A673 (cell line): ENCODE measurements at regions of chr1 and their contacts with region 1.

Region 1: GRCh38 chr1:175146529-175147213 is 45.9 kb downstream of the KIAA0040 start:
- DNase-seq: peak; percentile 75
- H3K4me3 ChIP-seq: no peak overlapping the region
- H3K27ac ChIP-seq: no peak overlapping the region
- H3K4me1 ChIP-seq: no peaks in the 10 kb centered on the region
- H3K27me3 ChIP-seq: no peaks in the 10 kb centered on the region
- CTCF ChIP-seq: peak; percentile 94

Region 2: DNA sequence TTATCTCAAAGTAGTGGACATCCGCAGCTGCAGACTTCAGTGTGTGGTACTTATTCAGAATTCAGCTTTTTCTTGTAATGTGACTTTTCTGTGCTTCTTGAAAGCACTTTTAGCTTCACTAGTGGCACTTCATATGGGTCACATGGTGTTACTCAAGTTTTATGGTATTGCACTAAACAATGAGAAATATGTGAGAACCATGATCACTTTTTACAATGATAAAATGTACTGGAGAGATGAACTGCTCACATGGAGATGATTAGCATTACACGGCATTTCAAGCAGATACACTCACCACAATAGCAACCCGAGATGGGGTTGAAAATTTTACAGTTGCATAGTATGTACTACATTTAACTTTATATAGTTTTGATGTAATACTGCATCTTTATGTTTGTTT is 739.0 kb before region 1 on chr1:
- CTCF ChIA-PET with region 1: interaction called, 10 read pairs
- POLR2A ChIA-PET with region 1: no interaction called
- intact Hi-C with region 1: no loop called
- DNase-seq: no peak
- H3K4me3 ChIP-seq: no peak overlapping the region
- H3K27ac ChIP-seq: no peak overlapping the region
- H3K4me1 ChIP-seq: no peaks in the 10 kb centered on the region
- H3K27me3 ChIP-seq: no peaks in the 10 kb centered on the region
- CTCF ChIP-seq: no peak

Region 3: GRCh38 chr1:175023043-175023921 is 123.4 kb before region 1 on chr1 and contains the start of gene MRPS14:
- CTCF ChIA-PET with region 1: no interaction called
- POLR2A ChIA-PET with region 1: no interaction called
- intact Hi-C with region 1: loop called (anchors 5 kb)
- DNase-seq: peak; percentile 97
- H3K4me3 ChIP-seq: peak within 1 kb of the TSS; percentile 96
- H3K27ac ChIP-seq: peak within 1 kb of the TSS; percentile 85
- H3K4me1 ChIP-seq: no peaks in the 10 kb centered on the region
- H3K27me3 ChIP-seq: no peaks in the 10 kb centered on the region
- CTCF ChIP-seq: no peak
- total RNA-seq, gene MRPS14: 39.6 and 40.1 TPM in 2 replicates

Region 4: DNA sequence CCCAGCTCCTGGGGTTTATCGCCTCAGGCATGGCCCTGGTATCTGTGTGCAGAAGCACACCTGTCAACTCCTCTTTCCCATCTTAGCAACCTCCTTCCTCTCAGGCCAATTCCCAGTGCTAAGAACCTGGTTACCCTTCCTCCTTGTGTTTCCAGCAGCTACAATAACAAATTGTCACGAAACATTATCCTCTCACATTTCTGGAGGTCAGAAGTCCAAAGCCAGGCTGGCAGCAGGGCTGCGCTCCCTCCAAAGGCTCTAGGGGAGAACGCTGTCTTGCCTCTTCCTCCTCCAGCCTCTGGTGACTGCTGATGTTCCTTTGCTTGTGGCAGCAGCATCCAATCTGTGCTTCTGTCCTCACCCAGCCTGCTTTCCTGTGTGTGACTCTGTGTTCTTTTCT is 112.7 kb before region 1 on chr1:
- CTCF ChIA-PET with region 1: interaction called, 13 read pairs
- POLR2A ChIA-PET with region 1: no interaction called
- intact Hi-C with region 1: loop called (anchors 5 kb)
- DNase-seq: no peak
- H3K4me3 ChIP-seq: no peak overlapping the region
- H3K27ac ChIP-seq: no peak overlapping the region
- H3K4me1 ChIP-seq: no peaks in the 10 kb centered on the region
- H3K27me3 ChIP-seq: no peaks in the 10 kb centered on the region
- CTCF ChIP-seq: no peak

Region 5: GRCh38 chr1:175124861-175125260 is 21.8 kb before region 1 on chr1:
- CTCF ChIA-PET with region 1: interaction called, 18 read pairs
- POLR2A ChIA-PET with region 1: no interaction called
- intact Hi-C with region 1: no loop called
- DNase-seq: no peak
- H3K4me3 ChIP-seq: no peak overlapping the region
- H3K27ac ChIP-seq: no peak overlapping the region
- H3K4me1 ChIP-seq: peaks cover 9% of the 10 kb centered on the region
- H3K27me3 ChIP-seq: no peaks in the 10 kb centered on the region
- CTCF ChIP-seq: no peak

Region 6: GRCh38 chr1:175303201-175303707 is 156.6 kb after region 1 on chr1:
- CTCF ChIA-PET with region 1: no interaction called
- POLR2A ChIA-PET with region 1: no interaction called
- intact Hi-C with region 1: no loop called
- DNase-seq: no peak
- H3K4me3 ChIP-seq: no peak overlapping the region
- H3K27ac ChIP-seq: no peak overlapping the region
- H3K4me1 ChIP-seq: no peaks in the 10 kb centered on the region
- H3K27me3 ChIP-seq: peaks cover 18% of the 10 kb centered on the region
- CTCF ChIP-seq: no peak